B cell (primary cell): ENCODE measurements at regions of chr4 and their contacts with region 1.

Region 1: DNA sequence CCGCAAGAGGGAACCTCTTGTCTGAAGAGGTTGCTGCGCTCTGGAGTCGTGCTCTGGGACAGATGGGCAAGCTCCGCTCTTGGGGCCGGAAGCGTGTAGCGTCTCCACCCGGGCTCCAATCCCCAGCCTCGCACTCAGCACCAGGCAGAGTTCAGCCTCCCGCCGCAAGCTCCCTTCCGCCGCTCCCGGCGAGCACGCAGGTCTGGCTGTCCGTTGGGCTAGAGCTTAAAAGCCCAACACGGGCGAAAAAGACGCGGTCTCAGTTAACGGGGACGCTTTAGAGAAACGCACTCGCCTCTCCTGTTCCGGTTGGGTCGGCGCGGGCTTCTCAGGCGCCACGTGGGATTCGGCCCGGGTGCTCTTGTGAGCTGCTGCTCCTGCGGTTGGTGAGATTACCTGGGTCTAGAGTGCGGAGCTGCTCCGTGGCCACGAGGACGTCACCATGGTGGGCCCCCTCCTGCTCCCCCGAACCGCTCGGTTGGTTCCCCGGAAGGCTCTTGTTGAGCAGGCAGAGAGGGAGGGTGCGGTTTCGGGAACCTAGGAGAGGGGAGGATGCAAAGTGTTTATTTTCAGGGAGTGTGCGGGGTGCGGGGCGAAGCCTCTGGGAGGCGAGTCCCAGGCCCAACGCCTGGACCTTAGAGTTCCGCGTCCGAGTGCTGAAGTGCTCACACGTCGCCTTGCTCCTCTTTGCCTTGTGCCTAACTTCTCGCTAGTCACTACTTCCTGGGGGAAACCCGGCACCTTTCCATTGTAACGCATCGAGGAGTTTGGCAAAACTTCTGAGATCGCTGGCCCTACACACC is at the start of gene TMA16:
- DNase-seq: peak; percentile 90
- ATAC-seq: peak; percentile 67
- H3K4me3 ChIP-seq: peak within 1 kb of the TSS; percentile 68 to 99 (median 96)
- H3K4me3 Mint-ChIP-seq: peak within 1 kb of the TSS; percentile 99
- H3K27ac ChIP-seq: peak within 1 kb of the TSS; percentile 80 to 81
- H3K27ac Mint-ChIP-seq: peak within 1 kb of the TSS; percentile 100
- H3K4me1 ChIP-seq: peaks cover 21 to 28% of the 10 kb centered on the region in 2 donors
- H3K4me1 Mint-ChIP-seq: peaks cover 42% of the 10 kb centered on the region
- H3K27me3 ChIP-seq: no peaks in the 10 kb centered on the region
- H3K27me3 Mint-ChIP-seq: no peaks in the 10 kb centered on the region
- CTCF ChIP-seq: no peak
- total RNA-seq, gene TMA16: 40.5 and 49.0 TPM in 2 replicates

Region 2: GRCh38 chr4:163166041-163166579 is 328.5 kb before region 1 on chr4:
- CTCF ChIA-PET with region 1: interaction called, 3 read pairs
- POLR2A ChIA-PET with region 1: interaction called, 3 read pairs
- intact Hi-C with region 1: loop called (anchors 1 kb)
- DNase-seq: peak; percentile 78
- ATAC-seq: peak; percentile 56
- H3K4me3 ChIP-seq: peak overlapping the region; percentile 73 to 86 (median 83)
- H3K4me3 Mint-ChIP-seq: peak overlapping the region; percentile 97
- H3K27ac ChIP-seq: peak overlapping the region; percentile 91 to 94
- H3K27ac Mint-ChIP-seq: peak overlapping the region; percentile 98
- H3K4me1 ChIP-seq: peaks cover 15 to 18% of the 10 kb centered on the region in 2 donors
- H3K4me1 Mint-ChIP-seq: peaks cover 39% of the 10 kb centered on the region
- H3K27me3 ChIP-seq: no peaks in the 10 kb centered on the region
- H3K27me3 Mint-ChIP-seq: no peaks in the 10 kb centered on the region
- CTCF ChIP-seq: no peak

Region 3: DNA sequence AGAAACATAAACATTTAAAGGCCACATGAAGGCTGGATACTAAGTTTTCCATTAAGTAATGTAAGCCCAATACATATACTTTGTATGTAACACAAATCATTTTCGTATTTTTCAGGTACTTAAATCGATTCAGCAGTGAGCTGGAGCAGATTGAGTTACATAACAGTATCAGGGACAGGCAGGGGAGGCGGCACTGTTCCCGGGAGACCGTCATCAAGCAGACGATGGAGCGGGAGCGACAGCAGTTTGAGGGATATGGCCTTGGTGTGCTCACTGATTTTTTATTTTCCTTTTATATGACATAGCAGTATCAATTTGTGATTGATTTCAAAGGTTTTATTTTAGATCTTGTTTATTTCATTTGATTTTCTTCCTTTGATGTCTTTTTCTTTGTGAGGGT is 20.6 kb after region 1 on chr4:
- CTCF ChIA-PET with region 1: no interaction called
- POLR2A ChIA-PET with region 1: no interaction called
- intact Hi-C with region 1: loop called (anchors 2 kb)
- DNase-seq: no peak
- ATAC-seq: no peak
- H3K4me3 ChIP-seq: no peak overlapping the region
- H3K4me3 Mint-ChIP-seq: no peak overlapping the region
- H3K27ac ChIP-seq: no peak overlapping the region
- H3K27ac Mint-ChIP-seq: no peak overlapping the region
- H3K4me1 ChIP-seq: no peaks in the 10 kb centered on the region
- H3K4me1 Mint-ChIP-seq: no peaks in the 10 kb centered on the region
- H3K27me3 ChIP-seq: no peaks in the 10 kb centered on the region
- H3K27me3 Mint-ChIP-seq: no peaks in the 10 kb centered on the region
- CTCF ChIP-seq: no peak

Region 4: DNA sequence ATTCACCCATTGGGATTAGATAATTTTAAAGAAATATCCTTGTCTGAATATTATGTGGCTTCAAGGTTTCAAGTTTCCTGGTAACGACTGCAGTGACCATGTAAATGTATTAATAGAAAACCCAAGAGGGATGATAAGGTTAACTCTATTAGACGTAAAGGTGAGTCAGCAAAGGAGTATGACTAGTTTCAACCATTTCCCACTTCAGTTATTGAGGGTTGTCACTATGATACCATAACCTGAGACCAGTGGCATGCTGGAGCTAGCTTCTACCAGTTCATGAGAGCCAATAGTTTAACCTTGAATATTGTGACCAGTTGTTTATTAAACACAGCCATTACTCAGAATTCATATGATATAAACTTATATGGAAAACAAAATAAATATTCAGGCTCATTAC is 270.0 kb after region 1 on chr4:
- CTCF ChIA-PET with region 1: no interaction called
- POLR2A ChIA-PET with region 1: no interaction called
- intact Hi-C with region 1: no loop called
- DNase-seq: no peak
- ATAC-seq: no peak
- H3K4me3 ChIP-seq: no peak overlapping the region
- H3K4me3 Mint-ChIP-seq: no peak overlapping the region
- H3K27ac ChIP-seq: no peak overlapping the region
- H3K27ac Mint-ChIP-seq: no peak overlapping the region
- H3K4me1 ChIP-seq: no peaks in the 10 kb centered on the region
- H3K4me1 Mint-ChIP-seq: no peaks in the 10 kb centered on the region
- H3K27me3 ChIP-seq: peaks cover 0 to 18% (median 3%) of the 10 kb centered on the region in 4 experiments
- H3K27me3 Mint-ChIP-seq: peaks cover 9% of the 10 kb centered on the region
- CTCF ChIP-seq: no peak